ENCODE measurements at regions of chr16 and their contacts with region 1.

Region 1: GRCh38 chr16:90046122-90046970 is 27.1 kb upstream of the DBNDD1 start:
- DNase-seq: no peak
- H3K4me3 Mint-ChIP-seq: no peak overlapping the region
- H3K27ac Mint-ChIP-seq: no peak overlapping the region
- H3K4me1 Mint-ChIP-seq: peaks cover 11% of the 10 kb centered on the region
- H3K27me3 Mint-ChIP-seq: no peaks in the 10 kb centered on the region
- CTCF ChIP-seq: no peak

Region 2: GRCh38 chr16:89815639-89816348 is 230.6 kb before region 1 on chr16:
- CTCF ChIA-PET with region 1: no interaction called
- POLR2A ChIA-PET with region 1: no interaction called
- intact Hi-C with region 1: no loop called
- DNase-seq: no peak
- H3K4me3 Mint-ChIP-seq: peak overlapping the region; percentile 76
- H3K27ac Mint-ChIP-seq: no peak overlapping the region
- H3K4me1 Mint-ChIP-seq: no peaks in the 10 kb centered on the region
- H3K27me3 Mint-ChIP-seq: no peaks in the 10 kb centered on the region
- CTCF ChIP-seq: no peak

Region 3: DNA sequence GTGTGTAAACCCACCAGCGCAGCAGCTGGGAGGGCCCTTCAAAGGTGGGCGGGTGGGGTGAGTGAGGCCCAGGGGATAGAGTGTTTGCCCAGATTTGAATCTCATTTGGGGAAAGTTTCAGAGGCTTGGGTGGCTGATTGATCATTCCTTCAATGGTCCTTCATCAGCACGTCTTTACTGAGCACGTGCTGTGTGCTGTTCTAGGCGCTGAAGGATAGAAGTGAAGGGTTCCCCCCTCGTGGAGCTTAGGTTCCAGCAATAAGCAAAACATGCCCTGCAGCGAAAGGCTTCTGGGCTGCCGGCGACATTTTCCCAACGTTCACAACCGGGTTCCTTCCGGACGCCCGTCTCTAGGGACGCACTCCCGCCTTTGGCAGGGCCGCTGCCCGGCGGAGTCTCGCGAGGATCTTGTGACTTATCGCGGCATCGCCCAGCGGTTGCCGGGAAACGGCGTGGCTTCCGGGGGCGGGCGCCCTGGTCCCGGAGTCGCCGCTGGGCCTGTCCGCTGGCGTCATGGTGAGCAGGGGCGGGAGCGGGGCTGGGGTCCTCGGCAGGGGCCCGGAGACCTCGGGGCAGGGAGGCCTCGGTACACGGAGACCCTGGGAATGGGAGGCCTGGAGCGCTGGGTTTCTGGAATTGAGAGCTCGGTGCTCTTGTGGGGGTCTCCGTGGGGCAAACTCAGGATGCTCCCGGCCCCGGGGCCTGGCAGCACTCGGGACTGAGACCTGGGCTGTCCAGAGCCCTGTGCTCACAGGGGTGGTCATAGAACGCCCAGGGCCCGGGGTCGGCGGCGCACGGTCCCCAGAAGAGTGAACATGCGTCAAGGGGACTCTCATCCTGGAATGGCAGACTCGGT is 23.9 kb before region 1 on chr16:
- CTCF ChIA-PET with region 1: interaction called, 4 read pairs
- POLR2A ChIA-PET with region 1: interaction called, 25 read pairs
- intact Hi-C with region 1: no loop called
- DNase-seq: peak; percentile 87
- H3K4me3 Mint-ChIP-seq: peak overlapping the region; percentile 80
- H3K27ac Mint-ChIP-seq: peak overlapping the region; percentile 80
- H3K4me1 Mint-ChIP-seq: peaks cover 5% of the 10 kb centered on the region
- H3K27me3 Mint-ChIP-seq: no peaks in the 10 kb centered on the region
- CTCF ChIP-seq: no peak

Region 4: DNA sequence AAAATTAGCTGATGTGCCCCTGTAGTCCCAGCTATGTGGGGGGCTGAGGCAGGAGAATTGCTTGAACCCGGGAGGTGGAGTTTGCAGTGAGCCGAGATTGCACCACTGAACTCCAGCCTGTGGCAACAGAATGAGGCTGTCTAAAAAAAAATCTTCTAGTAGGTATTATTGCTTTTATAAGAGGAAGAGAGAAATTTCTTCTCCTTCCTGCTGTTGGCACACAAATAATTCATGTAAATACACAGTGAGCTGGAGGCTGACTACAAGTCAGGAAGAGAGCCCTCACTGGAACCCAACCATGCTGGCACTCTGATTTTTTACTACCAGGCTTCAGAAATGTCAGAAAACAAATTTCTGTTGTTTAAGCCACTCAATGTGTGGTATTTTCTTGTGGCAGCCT is 24.1 kb after region 1 on chr16:
- CTCF ChIA-PET with region 1: no interaction called
- POLR2A ChIA-PET with region 1: no interaction called
- intact Hi-C with region 1: no loop called
- DNase-seq: no peak
- H3K4me3 Mint-ChIP-seq: no peak overlapping the region
- H3K27ac Mint-ChIP-seq: no peak overlapping the region
- H3K4me1 Mint-ChIP-seq: no peaks in the 10 kb centered on the region
- H3K27me3 Mint-ChIP-seq: peaks cover 22% of the 10 kb centered on the region
- CTCF ChIP-seq: no peak